Heart right ventricle (tissue), 16 donors: ENCODE measurements at regions of chr19 and their contacts with region 1.

Region 1: DNA sequence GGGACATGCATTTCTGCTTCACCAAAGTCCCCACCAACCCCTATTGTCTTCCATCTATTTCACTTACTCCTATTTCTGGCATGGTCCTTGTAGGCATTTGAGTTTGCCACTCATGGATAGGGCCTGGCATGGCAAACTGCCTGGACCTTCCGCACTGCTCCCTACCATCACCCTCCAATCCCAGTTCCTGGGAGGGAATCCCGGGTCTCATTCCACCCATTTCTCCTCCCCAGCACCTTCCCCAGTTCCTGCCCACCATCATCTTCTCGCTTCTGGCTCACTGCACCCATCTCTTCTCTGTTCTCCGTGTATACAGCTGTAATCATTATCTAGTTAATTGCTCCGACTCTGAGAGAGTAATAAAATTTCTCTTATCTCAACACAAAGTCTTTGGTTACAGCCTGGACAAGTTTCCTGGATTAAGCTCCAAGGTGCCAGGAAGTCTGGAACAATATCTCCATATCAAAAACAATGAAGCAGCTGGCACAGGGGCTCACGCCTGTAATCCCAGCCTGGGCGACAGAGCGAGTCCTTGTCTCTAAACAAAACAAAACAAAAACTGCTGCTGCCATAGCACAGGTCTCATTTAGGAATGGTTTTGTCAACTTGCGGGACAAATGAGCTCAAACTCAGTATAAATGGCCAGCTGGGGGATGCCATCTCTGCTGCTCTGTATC is 17.0 kb upstream of the COX7A1 start:
- DNase-seq: peak; percentile 18 to 37
- ATAC-seq: peak; percentile 41 to 79 (median 57)
- H3K4me3 ChIP-seq: peak overlapping the region in 1 of 10 donors; percentile 1
- H3K27ac ChIP-seq: peak overlapping the region; percentile 60 to 89 (median 74)
- H3K4me1 ChIP-seq: peaks cover 0 to 28% (median 19%) of the 10 kb centered on the region in 9 donors
- H3K27me3 ChIP-seq: no peaks in the 10 kb centered on the region
- CTCF ChIP-seq: no peak

Region 2: GRCh38 chr19:36132489-36132891 is 36.7 kb before region 1 on chr19:
- intact Hi-C with region 1: loop called (anchors 1 to 5 kb)
- DNase-seq: no peak
- ATAC-seq: no peak
- H3K4me3 ChIP-seq: no peak overlapping the region
- H3K27ac ChIP-seq: peak overlapping the region in 1 of 10 donors; percentile 59
- H3K4me1 ChIP-seq: peaks cover 0 to 52% (median 19%) of the 10 kb centered on the region in 9 donors
- H3K27me3 ChIP-seq: no peaks in the 10 kb centered on the region
- CTCF ChIP-seq: no peak

Region 3: GRCh38 chr19:36139473-36140303 is 29.5 kb before region 1 on chr19 and contains the start of gene CAPNS1:
- intact Hi-C with region 1: loop called in 1 of 10 experiments (anchors 1 kb)
- DNase-seq: peak; percentile 98 to 99
- ATAC-seq: peak; percentile 88 to 96 (median 94)
- H3K4me3 ChIP-seq: peak within 1 kb of the TSS; percentile 73 to 99 (median 88)
- H3K27ac ChIP-seq: peak within 1 kb of the TSS; percentile 89 to 100 (median 99)
- H3K4me1 ChIP-seq: peaks cover 0 to 34% (median 21%) of the 10 kb centered on the region in 9 donors
- H3K27me3 ChIP-seq: no peaks in the 10 kb centered on the region
- CTCF ChIP-seq: peak in 4 of 9 donors; percentile 19 to 29 (median 24)
- total RNA-seq, gene CAPNS1: 800 to 1,095 (median 894) TPM